Dendritic cell treated with granulocyte-macrophage colony-stimulating factor and Interleukin-4, amounts not matched to agents 40 ng/mL and 50 ng/mL, for 4 days (primary cell): ENCODE measurements at regions of chr1 and their contacts with region 1.

Region 1: GRCh38 chr1:54052934-54053744 is at the starts of genes TCEANC2 and TMEM59:
- H3K4me3 Mint-ChIP-seq: no peak within 1 kb of the TSS
- H3K27ac Mint-ChIP-seq: no peak within 1 kb of the TSS
- H3K4me1 Mint-ChIP-seq: peaks cover 40% of the 10 kb centered on the region
- H3K27me3 Mint-ChIP-seq: no peaks in the 10 kb centered on the region

Region 2: DNA sequence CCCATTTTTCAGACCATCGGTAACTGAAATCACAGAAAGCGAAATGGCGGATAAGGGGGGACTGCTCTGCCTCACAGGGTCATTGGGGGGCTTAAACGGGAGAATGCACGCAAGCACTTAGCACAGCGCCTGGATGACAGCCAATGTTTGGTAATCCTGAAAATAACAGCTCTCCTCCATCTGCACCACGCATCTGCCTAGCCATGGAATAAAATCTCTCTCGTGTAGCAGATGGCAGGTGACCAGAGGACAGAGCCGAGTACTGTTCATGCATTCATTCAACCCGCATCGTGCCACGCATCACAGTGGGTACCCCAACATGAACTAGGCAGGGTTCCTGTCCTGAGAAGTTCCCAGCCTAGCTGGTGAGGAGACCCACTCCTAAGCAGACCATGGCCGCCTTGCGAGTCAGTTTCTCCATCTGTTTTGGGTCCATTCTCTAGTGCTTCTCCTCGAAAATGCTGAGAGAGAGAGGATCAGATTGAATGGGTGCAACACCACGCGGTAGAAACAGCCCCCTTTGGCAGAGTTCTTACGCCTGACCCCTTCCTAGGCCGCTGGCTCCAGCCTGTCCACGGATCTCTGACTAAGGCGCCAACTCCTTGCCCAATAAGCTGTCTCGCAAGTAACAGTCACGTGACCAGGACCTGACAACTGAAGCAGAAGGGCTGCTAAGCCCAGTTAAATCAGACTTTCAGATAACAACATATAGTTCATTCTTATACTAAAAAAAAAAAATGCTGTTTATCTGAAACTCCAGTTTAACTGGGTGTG is 918.0 kb before region 1 on chr1:
- intact Hi-C with region 1: no loop called
- H3K4me3 Mint-ChIP-seq: no peak overlapping the region
- H3K27ac Mint-ChIP-seq: no peak overlapping the region
- H3K4me1 Mint-ChIP-seq: peaks cover 6% of the 10 kb centered on the region
- H3K27me3 Mint-ChIP-seq: peaks cover 2% of the 10 kb centered on the region

Region 3: DNA sequence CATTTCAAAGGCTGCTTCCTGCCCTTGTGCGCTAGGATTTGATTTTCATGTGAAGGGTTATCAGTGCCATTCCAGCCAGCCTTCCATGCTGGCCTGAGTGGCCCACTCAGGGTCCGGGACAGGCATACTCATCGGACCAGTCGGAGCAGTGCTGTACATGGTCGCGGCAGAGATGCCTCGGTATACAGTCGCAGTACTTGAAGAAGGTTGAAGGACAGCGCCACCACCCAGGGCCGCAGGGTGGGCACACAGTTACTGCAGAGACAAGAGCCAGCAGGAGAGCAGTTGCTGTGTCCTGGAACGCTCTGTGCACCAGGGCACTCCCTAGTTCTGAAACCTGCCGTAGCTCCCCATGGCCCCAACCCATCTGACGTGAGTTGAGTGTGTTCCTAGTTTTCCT is 44.3 kb before region 1 on chr1:
- intact Hi-C with region 1: no loop called
- H3K4me3 Mint-ChIP-seq: no peak overlapping the region
- H3K27ac Mint-ChIP-seq: no peak overlapping the region
- H3K4me1 Mint-ChIP-seq: no peaks in the 10 kb centered on the region
- H3K27me3 Mint-ChIP-seq: peaks cover 1% of the 10 kb centered on the region

Region 4: DNA sequence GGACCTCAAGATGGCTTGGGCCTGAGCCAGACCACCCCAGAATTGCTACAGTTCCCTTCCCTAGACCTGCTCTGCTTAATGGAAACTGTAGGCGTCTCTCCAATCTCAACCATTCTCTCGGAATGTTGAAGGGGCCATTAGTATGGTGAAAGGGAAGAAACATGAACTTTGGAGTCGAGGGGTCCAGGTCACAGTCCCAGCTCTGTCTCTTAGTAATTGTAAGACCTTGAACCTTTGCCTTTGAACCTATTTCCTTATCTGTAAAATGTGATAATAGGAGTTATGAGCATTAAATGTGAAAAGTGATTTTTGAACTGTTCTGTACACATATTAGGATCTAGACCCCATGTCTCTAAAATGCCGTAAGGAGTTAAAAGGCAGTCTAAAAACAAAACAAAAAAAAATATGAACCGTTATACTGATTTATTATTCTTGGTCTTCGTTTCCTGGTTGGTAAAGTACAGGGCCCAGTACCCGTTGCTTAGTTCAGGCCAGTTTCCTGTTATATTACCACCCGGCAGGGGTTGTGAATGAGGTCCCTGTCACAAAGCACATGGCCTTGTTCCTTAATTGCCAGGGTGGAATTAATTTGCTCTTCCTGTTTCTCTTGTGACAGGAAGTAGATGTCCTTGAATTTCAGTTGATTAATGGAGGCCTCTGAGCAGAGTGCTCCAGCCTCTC is 42.5 kb after region 1 on chr1:
- intact Hi-C with region 1: loop called (anchors 5 kb)
- H3K4me3 Mint-ChIP-seq: no peak overlapping the region
- H3K27ac Mint-ChIP-seq: peak overlapping the region; percentile 73
- H3K4me1 Mint-ChIP-seq: peaks cover 42% of the 10 kb centered on the region
- H3K27me3 Mint-ChIP-seq: no peaks in the 10 kb centered on the region

Region 5: GRCh38 chr1:54199765-54200518 is 146.8 kb after region 1 on chr1 and contains the starts of genes CYB5RL and MRPL37:
- intact Hi-C with region 1: loop called (anchors 5 kb)
- H3K4me3 Mint-ChIP-seq: peak within 1 kb of the TSS; percentile 90
- H3K27ac Mint-ChIP-seq: peak within 1 kb of the TSS; percentile 82
- H3K4me1 Mint-ChIP-seq: peaks cover 25% of the 10 kb centered on the region
- H3K27me3 Mint-ChIP-seq: no peaks in the 10 kb centered on the region

Region 6: GRCh38 chr1:54406339-54407153 is 353.4 kb after region 1 on chr1 and contains the start of gene SSBP3:
- intact Hi-C with region 1: loop called (anchors 5 kb)
- H3K4me3 Mint-ChIP-seq: peak within 1 kb of the TSS; percentile 83
- H3K27ac Mint-ChIP-seq: peak within 1 kb of the TSS; percentile 96
- H3K4me1 Mint-ChIP-seq: peaks cover 54% of the 10 kb centered on the region
- H3K27me3 Mint-ChIP-seq: no peaks in the 10 kb centered on the region

Region 7: GRCh38 chr1:54715493-54716298 is 662.6 kb after region 1 on chr1 and contains the start of gene TTC4:
- intact Hi-C with region 1: loop called (anchors 5 kb)
- H3K4me3 Mint-ChIP-seq: peak within 1 kb of the TSS; percentile 89
- H3K27ac Mint-ChIP-seq: peak within 1 kb of the TSS; percentile 85
- H3K4me1 Mint-ChIP-seq: peaks cover 27% of the 10 kb centered on the region
- H3K27me3 Mint-ChIP-seq: peaks cover 2% of the 10 kb centered on the region